ENCODE measurements at regions of chr14 and their contacts with region 1.

Region 1: GRCh38 chr14:95561001-95561412 is 26.2 kb downstream of the GLRX5 start:
- DNase-seq: peak; percentile 81
- ATAC-seq: peak; percentile 76

Region 2: GRCh38 chr14:95699412-95699811 is 138.4 kb after region 1 on chr14:
- intact Hi-C with region 1: no loop called
- DNase-seq: no peak
- ATAC-seq: no peak

Region 3: DNA sequence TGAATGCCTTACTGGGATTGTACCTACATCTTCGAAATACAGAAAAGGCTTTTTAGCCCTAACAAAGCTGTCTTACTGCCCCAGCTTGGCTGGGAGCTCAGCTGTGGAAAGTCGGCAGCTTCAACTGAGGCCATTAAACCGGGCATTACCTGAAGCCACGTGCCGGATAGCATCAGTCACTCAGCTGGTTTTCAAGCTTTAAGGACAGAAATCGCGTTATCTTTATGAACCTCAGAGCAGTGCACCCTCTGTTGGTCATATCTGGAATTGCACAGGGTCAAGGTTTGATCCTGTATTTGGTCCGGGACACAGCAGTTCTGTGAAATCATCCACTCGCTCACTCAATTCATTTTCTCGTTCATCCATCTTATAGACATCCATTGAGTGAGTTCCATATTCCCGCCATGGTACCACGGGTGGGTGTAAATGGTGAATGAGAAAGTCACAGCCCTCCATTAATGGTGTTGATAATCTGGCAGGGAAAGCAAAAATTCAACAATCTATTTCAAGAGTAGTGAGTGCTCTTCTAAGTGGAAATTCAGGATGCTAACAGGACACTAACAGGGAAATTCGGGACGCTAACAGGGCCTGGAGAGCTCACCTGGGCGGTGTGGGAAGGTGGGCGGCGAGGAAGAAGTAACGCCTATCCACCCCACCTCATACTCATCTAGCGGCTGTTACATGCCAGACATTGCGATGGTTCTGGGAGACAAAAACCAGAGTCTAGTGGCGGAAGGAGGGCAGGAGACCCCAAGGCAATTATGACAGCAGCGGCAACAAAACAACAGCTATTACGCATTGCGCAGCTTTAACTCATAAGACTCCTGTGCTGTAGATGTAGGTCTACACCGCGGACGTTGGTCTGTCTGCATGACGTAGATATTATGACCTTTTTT is 213.5 kb after region 1 on chr14:
- intact Hi-C with region 1: loop called (anchors 2 kb)
- DNase-seq: no peak
- ATAC-seq: no peak

Region 4: GRCh38 chr14:96275177-96276112 is 714.4 kb after region 1 on chr14:
- intact Hi-C with region 1: loop called (anchors 5 kb)
- DNase-seq: peak; percentile 79
- ATAC-seq: peak; percentile 38